ENCODE measurements at regions of chr14 and their contacts with region 1.

Region 1: GRCh38 chr14:65637780-65638179 is 225.2 kb downstream of the FUT8 start:
- DNase-seq: peak; percentile 31
- H3K4me3 Mint-ChIP-seq: peak overlapping the region; percentile 34
- H3K27ac Mint-ChIP-seq: peak overlapping the region; percentile 79
- H3K4me1 Mint-ChIP-seq: peaks cover 49% of the 10 kb centered on the region
- H3K27me3 Mint-ChIP-seq: no peaks in the 10 kb centered on the region

Region 2: GRCh38 chr14:64671591-64671990 is 966.2 kb before region 1 on chr14:
- intact Hi-C with region 1: no loop called
- DNase-seq: no peak
- H3K4me3 Mint-ChIP-seq: no peak overlapping the region
- H3K27ac Mint-ChIP-seq: no peak overlapping the region
- H3K4me1 Mint-ChIP-seq: peaks cover 36% of the 10 kb centered on the region
- H3K27me3 Mint-ChIP-seq: peaks cover 18% of the 10 kb centered on the region

Region 3: GRCh38 chr14:65102441-65103149 is 535.2 kb before region 1 on chr14 and contains the start of gene MAX:
- intact Hi-C with region 1: loop called (anchors 5 kb)
- DNase-seq: peak; percentile 98
- H3K4me3 Mint-ChIP-seq: peak within 1 kb of the TSS; percentile 95
- H3K27ac Mint-ChIP-seq: peak within 1 kb of the TSS; percentile 95
- H3K4me1 Mint-ChIP-seq: peaks cover 33% of the 10 kb centered on the region
- H3K27me3 Mint-ChIP-seq: peaks cover 6% of the 10 kb centered on the region
- total RNA-seq, gene MAX: 135 and 137 TPM in 2 replicates

Region 4: DNA sequence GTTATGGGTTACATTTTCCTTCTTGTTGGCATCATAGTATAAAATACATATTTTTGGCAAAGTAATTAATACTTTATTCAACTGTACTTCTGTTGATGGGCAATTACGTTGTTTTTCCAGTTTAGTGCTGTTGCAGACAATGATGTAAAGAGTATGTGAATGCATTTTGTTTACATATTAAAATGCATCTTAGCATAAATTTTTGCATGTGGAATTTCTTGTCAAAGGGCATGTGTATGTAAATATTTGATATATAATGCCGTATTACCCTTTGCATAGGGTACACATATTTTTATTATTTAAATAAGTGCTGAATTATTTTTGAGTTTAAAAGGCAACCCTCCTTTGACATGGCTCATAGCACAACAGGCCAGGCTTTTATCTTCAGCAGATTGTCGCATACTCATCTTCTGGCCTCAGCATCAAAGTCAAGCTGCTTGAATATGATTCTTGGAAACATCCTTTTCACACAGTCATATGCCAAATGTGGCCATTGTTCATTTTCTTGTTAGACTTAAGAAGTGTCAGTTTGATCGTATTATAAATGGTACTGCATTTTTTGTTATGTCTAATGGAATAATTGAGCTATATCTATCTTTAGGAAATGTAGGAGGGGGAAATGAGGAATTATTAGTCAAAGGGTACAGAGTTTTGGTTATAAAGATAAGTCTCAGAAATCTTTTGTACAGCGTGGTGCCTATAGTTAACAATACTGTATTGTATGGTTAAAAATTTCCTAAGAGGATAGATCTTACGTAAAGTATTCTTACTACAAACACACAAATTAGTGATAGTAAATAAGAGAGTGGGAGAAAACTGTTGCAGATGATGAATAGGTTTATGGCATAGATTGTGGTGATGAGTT is 86.8 kb before region 1 on chr14:
- intact Hi-C with region 1: no loop called
- DNase-seq: no peak
- H3K4me3 Mint-ChIP-seq: no peak overlapping the region
- H3K27ac Mint-ChIP-seq: peak overlapping the region; percentile 0
- H3K4me1 Mint-ChIP-seq: peaks cover 14% of the 10 kb centered on the region
- H3K27me3 Mint-ChIP-seq: no peaks in the 10 kb centered on the region

Region 5: GRCh38 chr14:65565948-65566347 is 71.8 kb before region 1 on chr14:
- intact Hi-C with region 1: loop called (anchors 5 kb)
- DNase-seq: no peak
- H3K4me3 Mint-ChIP-seq: no peak overlapping the region
- H3K27ac Mint-ChIP-seq: peak overlapping the region; percentile 84
- H3K4me1 Mint-ChIP-seq: peaks cover 57% of the 10 kb centered on the region
- H3K27me3 Mint-ChIP-seq: no peaks in the 10 kb centered on the region

Region 6: GRCh38 chr14:65704850-65705249 is 67.1 kb after region 1 on chr14:
- intact Hi-C with region 1: loop called (anchors 5 kb)
- DNase-seq: no peak
- H3K4me3 Mint-ChIP-seq: no peak overlapping the region
- H3K27ac Mint-ChIP-seq: peak overlapping the region; percentile 85
- H3K4me1 Mint-ChIP-seq: no peaks in the 10 kb centered on the region
- H3K27me3 Mint-ChIP-seq: no peaks in the 10 kb centered on the region

Region 7: GRCh38 chr14:65927931-65928356 is 290.2 kb after region 1 on chr14:
- intact Hi-C with region 1: loop called (anchors 5 kb)
- DNase-seq: peak; percentile 82
- H3K4me3 Mint-ChIP-seq: peak overlapping the region; percentile 50
- H3K27ac Mint-ChIP-seq: peak overlapping the region; percentile 86
- H3K4me1 Mint-ChIP-seq: peaks cover 60% of the 10 kb centered on the region
- H3K27me3 Mint-ChIP-seq: peaks cover 4% of the 10 kb centered on the region

Measured in activated T-helper 1 cell treated with anti-CD3 and anti-CD28 coated beads, Interleukin-12 subunit alpha, Interleukin-12 subunit beta, Interleukin-2, Interleukin-4 antibody, amounts not matched to agents 30 ng/mL and 10 ng/mL and 1 ng/mL, durations not matched to agents 14 hours and 24 hours and 36 hours (primary cell).